H1 (cell line): ENCODE measurements at regions of chr2 and their contacts with region 1.

Region 1: DNA sequence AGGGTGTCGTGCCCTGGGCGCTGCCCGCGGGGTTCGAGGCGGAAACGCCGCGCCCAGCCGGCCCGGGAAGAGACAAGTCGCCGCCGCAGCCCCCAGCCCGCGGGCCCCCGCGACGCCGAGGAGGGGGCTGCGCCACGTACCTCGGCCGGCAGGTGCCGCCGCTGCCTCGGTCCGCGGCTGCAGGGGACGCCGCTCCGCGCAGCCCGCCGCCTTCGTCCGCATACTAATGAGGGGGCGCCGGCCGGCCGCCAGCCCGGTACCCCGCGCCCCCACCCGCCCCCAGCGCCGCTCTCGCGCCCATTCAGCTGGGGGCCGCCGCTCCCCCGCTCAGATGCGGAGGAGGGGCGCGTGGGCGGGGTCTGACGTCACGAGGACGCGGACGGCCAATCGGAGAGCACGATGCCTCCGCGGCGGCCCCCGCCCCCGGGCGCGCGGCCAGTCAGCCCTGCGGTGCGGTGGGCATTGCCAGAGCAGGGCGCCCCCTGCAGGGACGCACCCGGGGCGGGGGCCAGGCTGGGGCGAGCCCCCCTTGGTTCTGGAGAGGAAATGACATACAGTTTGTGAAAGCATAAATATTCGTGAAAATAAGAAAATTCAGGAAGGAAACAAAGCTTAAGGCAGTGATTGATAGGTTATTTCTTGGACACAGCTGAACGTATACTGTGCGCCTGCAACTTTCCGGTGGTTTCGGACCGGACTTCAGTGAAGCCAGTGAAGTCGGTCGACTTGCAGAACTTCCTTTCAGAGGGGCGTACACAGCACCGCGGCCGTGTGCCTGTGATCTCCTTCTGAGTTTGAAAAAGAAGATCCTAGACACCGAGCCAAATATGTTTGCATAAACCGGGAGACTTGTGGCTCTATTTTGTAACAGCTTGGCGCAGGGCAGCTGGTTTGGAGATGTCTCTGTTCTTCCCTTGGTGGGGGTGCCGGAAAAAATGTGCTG is at the start of gene ST3GAL5:
- DNase-seq: peak; percentile 49 to 94
- H3K4me3 ChIP-seq: peak within 1 kb of the TSS; percentile 53 to 88 (median 76)
- H3K27ac ChIP-seq: no peak within 1 kb of the TSS
- H3K4me1 ChIP-seq: peaks cover 5 to 8% (median 6%) of the 10 kb centered on the region in 4 experiments
- H3K27me3 ChIP-seq: peaks cover 0 to 19% (median 13%) of the 10 kb centered on the region in 4 experiments; a peak in 6 of 7 replicates
- CTCF ChIP-seq: peak; percentile 55 to 69 (median 69)
- EP300 ChIP-seq: no peak
- POLR2A ChIP-seq: no peak
- RAD21 ChIP-seq: peak; percentile 25 to 54; a peak in 3 of 4 replicates
- total RNA-seq, gene ST3GAL5: 3.0 and 4.5 TPM in 2 replicates

Region 2: GRCh38 chr2:85804583-85804982 is 84.4 kb before region 1 on chr2:
- CTCF ChIA-PET with region 1: no interaction called
- POLR2A ChIA-PET with region 1: no interaction called
- DNase-seq: no peak
- H3K4me3 ChIP-seq: no peak overlapping the region
- H3K27ac ChIP-seq: no peak overlapping the region
- H3K4me1 ChIP-seq: no peaks in the 10 kb centered on the region
- H3K27me3 ChIP-seq: peaks cover 0 to 2% (median 0%) of the 10 kb centered on the region in 4 experiments; a peak in 1 of 7 replicates
- CTCF ChIP-seq: peak; percentile 51 to 61 (median 59)
- EP300 ChIP-seq: no peak
- POLR2A ChIP-seq: no peak
- RAD21 ChIP-seq: peak; percentile 62

Region 3: GRCh38 chr2:85873679-85874078 is 15.3 kb before region 1 on chr2:
- CTCF ChIA-PET with region 1: interaction called, 19 read pairs
- POLR2A ChIA-PET with region 1: interaction called, 4 read pairs
- DNase-seq: no peak
- H3K4me3 ChIP-seq: no peak overlapping the region
- H3K27ac ChIP-seq: no peak overlapping the region
- H3K4me1 ChIP-seq: no peaks in the 10 kb centered on the region
- H3K27me3 ChIP-seq: no peaks in the 10 kb centered on the region
- CTCF ChIP-seq: peak; percentile 31 to 53 (median 40); a peak in 3 of 4 replicates
- EP300 ChIP-seq: no peak
- POLR2A ChIP-seq: no peak
- RAD21 ChIP-seq: peak in 1 of 2 experiments; percentile 6; a peak in 1 of 4 replicates

Region 4: GRCh38 chr2:85878719-85879385 is 10.1 kb before region 1 on chr2:
- CTCF ChIA-PET with region 1: interaction called, 19 read pairs
- POLR2A ChIA-PET with region 1: interaction called, 4 read pairs
- DNase-seq: no peak
- H3K4me3 ChIP-seq: no peak overlapping the region
- H3K27ac ChIP-seq: no peak overlapping the region
- H3K4me1 ChIP-seq: peaks cover 0 to 2% (median 0%) of the 10 kb centered on the region in 4 experiments; a peak in 1 of 7 replicates
- H3K27me3 ChIP-seq: no peaks in the 10 kb centered on the region
- CTCF ChIP-seq: no peak
- EP300 ChIP-seq: no peak
- POLR2A ChIP-seq: no peak
- RAD21 ChIP-seq: no peak

Region 5: GRCh38 chr2:85905187-85905666 is 16.3 kb after region 1 on chr2:
- CTCF ChIA-PET with region 1: interaction called, 13 read pairs
- POLR2A ChIA-PET with region 1: interaction called, 3 read pairs
- DNase-seq: no peak
- H3K4me3 ChIP-seq: no peak overlapping the region
- H3K27ac ChIP-seq: no peak overlapping the region
- H3K4me1 ChIP-seq: no peaks in the 10 kb centered on the region; a peak in 1 of 7 replicates
- H3K27me3 ChIP-seq: no peaks in the 10 kb centered on the region
- CTCF ChIP-seq: no peak
- EP300 ChIP-seq: no peak
- POLR2A ChIP-seq: no peak
- RAD21 ChIP-seq: no peak

Region 6: DNA sequence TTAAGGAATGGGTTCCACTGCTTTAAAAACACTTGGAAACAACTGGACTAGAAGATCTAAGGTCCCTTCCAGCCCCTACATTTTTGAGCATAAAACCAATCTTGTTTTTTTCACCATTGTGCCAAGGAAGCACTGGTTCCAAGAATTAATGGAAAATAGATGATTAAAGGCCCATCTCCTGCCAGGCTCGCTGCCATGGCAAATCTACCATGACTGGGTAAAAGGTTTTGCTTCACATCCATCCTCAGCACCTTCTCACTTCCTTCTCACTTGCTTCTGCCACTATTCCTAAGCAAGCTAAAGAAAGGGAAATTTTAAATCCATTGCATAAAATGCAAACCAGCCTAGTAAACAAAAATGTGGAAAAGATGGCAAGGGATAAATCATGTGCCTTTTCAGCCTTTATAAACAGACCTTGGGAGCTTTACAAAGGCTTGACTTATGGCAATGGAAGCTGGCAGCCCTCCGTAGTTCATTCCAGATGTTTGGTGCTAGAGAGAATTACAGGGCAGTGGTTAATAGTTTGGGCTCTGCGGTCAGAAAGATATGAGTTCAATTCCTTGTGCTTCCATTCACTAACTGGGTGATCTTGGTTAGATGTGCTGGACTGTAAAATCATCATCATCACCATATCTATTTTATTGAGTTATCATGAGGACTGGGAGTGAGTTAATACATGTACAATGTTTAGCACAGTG is 26.8 kb after region 1 on chr2:
- CTCF ChIA-PET with region 1: interaction called, 11 read pairs
- POLR2A ChIA-PET with region 1: no interaction called
- DNase-seq: no peak
- H3K4me3 ChIP-seq: no peak overlapping the region
- H3K27ac ChIP-seq: no peak overlapping the region
- H3K4me1 ChIP-seq: no peaks in the 10 kb centered on the region
- H3K27me3 ChIP-seq: no peaks in the 10 kb centered on the region
- CTCF ChIP-seq: no peak
- EP300 ChIP-seq: no peak
- POLR2A ChIP-seq: no peak
- RAD21 ChIP-seq: no peak